ENCODE measurements at regions of chr1 and their contacts with region 1.

Region 1: DNA sequence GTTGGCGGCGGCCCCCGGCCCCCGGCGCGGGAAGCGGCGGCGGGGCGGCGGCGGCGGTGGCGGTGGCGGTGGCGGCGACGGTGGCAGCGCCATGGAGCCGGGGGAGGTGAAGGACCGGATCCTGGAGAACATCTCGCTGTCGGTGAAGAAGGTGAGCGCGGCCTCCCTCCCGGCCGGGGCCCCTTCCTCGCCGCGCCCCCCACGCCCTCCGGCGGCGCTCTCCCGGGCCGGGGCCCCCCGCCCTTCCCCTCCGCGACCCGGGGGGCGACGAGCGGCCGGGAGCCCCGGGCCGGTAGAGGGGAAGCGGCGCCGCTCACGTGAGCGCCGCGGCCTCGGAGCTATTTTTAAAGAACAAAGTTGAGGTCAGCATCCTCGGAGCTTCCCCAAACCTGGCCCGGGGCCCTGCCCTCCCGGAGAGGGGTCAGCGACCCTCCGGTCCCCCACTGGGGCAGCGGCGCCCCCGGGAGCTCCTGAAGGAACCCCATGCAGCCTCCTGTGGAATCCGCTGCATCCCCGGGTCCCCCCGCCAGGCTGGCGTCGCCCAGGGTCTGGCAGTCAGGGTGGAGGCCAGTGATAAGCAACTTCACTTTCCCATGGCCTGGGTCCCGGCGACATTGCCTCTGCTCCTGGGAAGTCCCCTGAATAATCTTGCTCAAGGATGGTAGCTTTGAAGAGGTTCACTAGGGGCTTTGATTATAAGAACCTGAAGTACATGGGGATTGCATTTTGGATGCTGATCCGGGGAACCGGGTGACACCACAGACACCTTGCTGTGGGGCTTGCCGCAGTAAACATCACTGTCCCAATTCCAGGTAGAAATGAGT is 560 bp downstream of the PLEKHM2 start:
- DNase-seq: peak; percentile 33 to 67 (median 57)
- H3K4me3 ChIP-seq: peak overlapping the region; percentile 96
- H3K27ac ChIP-seq: peak overlapping the region; percentile 92 to 97
- H3K4me1 ChIP-seq: peaks cover 8% of the 10 kb centered on the region
- H3K27me3 ChIP-seq: no peaks in the 10 kb centered on the region
- CTCF ChIP-seq: no peak
- EP300 ChIP-seq: no peak
- POLR2A ChIP-seq: no peak

Region 2: GRCh38 chr1:15231714-15232201 is 452.9 kb before region 1 on chr1:
- intact Hi-C with region 1: no loop called
- DNase-seq: no peak
- H3K4me3 ChIP-seq: no peak overlapping the region
- H3K27ac ChIP-seq: no peak overlapping the region
- H3K4me1 ChIP-seq: no peaks in the 10 kb centered on the region
- H3K27me3 ChIP-seq: no peaks in the 10 kb centered on the region
- CTCF ChIP-seq: no peak
- EP300 ChIP-seq: no peak
- POLR2A ChIP-seq: no peak

Region 3: GRCh38 chr1:15526490-15527339 is 158.0 kb before region 1 on chr1 and contains the start of gene DNAJC16:
- intact Hi-C with region 1: loop called in 1 of 4 experiments (anchors 5 kb)
- DNase-seq: peak; percentile 98 to 100 (median 99)
- H3K4me3 ChIP-seq: peak within 1 kb of the TSS; percentile 87
- H3K27ac ChIP-seq: peak within 1 kb of the TSS; percentile 86 to 97
- H3K4me1 ChIP-seq: peaks cover 4% of the 10 kb centered on the region
- H3K27me3 ChIP-seq: no peaks in the 10 kb centered on the region
- CTCF ChIP-seq: peak in 1 of 3 donors; percentile 45
- EP300 ChIP-seq: peak; percentile 91
- POLR2A ChIP-seq: peak; percentile 64
- total RNA-seq, gene DNAJC16: 12.3 to 33.3 (median 17.9) TPM

Region 4: GRCh38 chr1:15617175-15617880 is 67.4 kb before region 1 on chr1 and contains the start of gene DDI2:
- intact Hi-C with region 1: loop called in 1 of 4 experiments (anchors 5 kb)
- DNase-seq: peak; percentile 97 to 98 (median 97)
- H3K4me3 ChIP-seq: peak within 1 kb of the TSS; percentile 98
- H3K27ac ChIP-seq: peak within 1 kb of the TSS; percentile 88
- H3K4me1 ChIP-seq: peaks cover 8% of the 10 kb centered on the region
- H3K27me3 ChIP-seq: no peaks in the 10 kb centered on the region
- CTCF ChIP-seq: no peak
- EP300 ChIP-seq: no peak
- POLR2A ChIP-seq: peak; percentile 82
- total RNA-seq, gene DDI2: 18.7 to 30.9 (median 23.1) TPM

Measured in ovary (tissue), 10 donors.